PC-9 (cell line): ENCODE measurements at regions of chrX and their contacts with region 1.

Region 1: DNA sequence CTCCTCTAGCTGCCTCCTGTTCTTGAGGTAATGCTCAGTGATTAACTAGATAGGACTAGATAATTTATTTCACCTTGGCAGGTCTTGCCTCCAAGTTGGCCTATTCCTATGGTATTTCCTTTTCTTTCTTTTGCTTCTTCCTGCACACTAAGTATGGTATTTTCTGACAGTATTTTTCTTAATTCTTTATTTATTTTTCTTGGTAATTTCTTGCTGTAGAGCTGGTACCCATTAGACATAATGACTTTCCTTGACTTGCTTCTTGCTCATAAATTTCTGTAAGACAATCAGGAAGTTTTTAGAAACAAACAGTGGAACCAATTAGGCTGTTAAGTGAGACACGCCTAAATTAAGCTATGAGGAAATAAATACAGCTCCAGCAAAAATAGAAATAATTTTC is 9.5 kb downstream of the RAB9A start:
- DNase-seq: peak in 1 of 2 experiments; percentile 49
- H3K4me3 ChIP-seq: no peak overlapping the region
- H3K27ac ChIP-seq: peak overlapping the region; percentile 19; the same call in 1 of the 2 replicates
- H3K4me1 ChIP-seq: peaks cover 33% of the 10 kb centered on the region
- H3K27me3 ChIP-seq: no peaks in the 10 kb centered on the region
- CTCF ChIP-seq: no peak

Region 2: DNA sequence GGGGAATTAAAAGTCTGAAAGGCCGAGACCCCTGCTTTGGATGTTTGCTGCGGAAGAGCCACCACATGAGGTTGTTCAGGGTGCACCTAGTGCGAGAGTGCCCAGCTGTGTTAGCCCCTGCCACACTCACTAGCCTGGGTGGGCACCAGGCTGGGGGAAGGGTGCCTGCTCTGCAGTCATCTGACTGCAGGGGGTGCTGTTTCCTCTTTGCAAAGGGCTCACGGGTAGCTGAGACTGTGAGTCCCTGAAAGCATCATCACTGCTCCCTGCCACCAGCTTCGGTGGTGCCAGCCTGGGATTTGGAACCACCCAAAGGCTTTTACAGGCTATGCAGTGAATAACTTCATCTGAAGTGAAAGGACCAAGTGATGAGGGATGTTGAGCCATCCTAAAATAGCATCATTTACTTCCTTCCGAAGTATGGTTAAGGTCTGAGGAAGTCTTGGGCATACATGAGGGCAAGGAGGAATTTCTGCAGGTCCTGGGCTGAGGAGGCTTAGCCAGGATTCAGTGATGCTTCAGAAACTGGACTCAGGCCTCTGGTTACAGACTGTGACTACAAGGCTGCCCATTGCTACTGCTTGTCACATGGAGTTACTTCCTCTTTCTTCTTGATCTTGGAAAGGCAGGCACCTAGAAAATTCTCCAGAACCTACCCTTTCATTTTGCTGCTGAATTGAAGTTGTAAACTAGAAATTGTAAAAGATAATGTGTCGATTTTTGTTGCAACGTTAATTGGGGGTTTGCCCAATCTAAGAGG is 1200.4 kb before region 1 on chrX:
- CTCF ChIA-PET with region 1: no interaction called
- POLR2A ChIA-PET with region 1: interaction called, 13 read pairs
- intact Hi-C with region 1: no loop called
- DNase-seq: no peak
- H3K4me3 ChIP-seq: no peak overlapping the region
- H3K27ac ChIP-seq: no peak overlapping the region
- H3K4me1 ChIP-seq: no peaks in the 10 kb centered on the region
- H3K27me3 ChIP-seq: no peaks in the 10 kb centered on the region
- CTCF ChIP-seq: peak; percentile 40; the same call in 1 of the 2 replicates